ENCODE measurements at regions of chr14 and their contacts with region 1.

Region 1: GRCh38 chr14:69129264-69129880 is 23.5 kb downstream of the DCAF5 start:
- DNase-seq: peak; percentile 58
- H3K4me3 Mint-ChIP-seq: no peak overlapping the region
- H3K27ac Mint-ChIP-seq: peak overlapping the region; percentile 51
- H3K4me1 Mint-ChIP-seq: peaks cover 35% of the 10 kb centered on the region
- H3K27me3 Mint-ChIP-seq: no peaks in the 10 kb centered on the region

Region 2: GRCh38 chr14:69153131-69153872 is 23.9 kb after region 1 on chr14:
- intact Hi-C with region 1: loop called (anchors 2 kb)
- DNase-seq: peak; percentile 90
- H3K4me3 Mint-ChIP-seq: peak overlapping the region; percentile 90
- H3K27ac Mint-ChIP-seq: peak overlapping the region; percentile 92
- H3K4me1 Mint-ChIP-seq: peaks cover 33% of the 10 kb centered on the region
- H3K27me3 Mint-ChIP-seq: peaks cover 39% of the 10 kb centered on the region

Region 3: DNA sequence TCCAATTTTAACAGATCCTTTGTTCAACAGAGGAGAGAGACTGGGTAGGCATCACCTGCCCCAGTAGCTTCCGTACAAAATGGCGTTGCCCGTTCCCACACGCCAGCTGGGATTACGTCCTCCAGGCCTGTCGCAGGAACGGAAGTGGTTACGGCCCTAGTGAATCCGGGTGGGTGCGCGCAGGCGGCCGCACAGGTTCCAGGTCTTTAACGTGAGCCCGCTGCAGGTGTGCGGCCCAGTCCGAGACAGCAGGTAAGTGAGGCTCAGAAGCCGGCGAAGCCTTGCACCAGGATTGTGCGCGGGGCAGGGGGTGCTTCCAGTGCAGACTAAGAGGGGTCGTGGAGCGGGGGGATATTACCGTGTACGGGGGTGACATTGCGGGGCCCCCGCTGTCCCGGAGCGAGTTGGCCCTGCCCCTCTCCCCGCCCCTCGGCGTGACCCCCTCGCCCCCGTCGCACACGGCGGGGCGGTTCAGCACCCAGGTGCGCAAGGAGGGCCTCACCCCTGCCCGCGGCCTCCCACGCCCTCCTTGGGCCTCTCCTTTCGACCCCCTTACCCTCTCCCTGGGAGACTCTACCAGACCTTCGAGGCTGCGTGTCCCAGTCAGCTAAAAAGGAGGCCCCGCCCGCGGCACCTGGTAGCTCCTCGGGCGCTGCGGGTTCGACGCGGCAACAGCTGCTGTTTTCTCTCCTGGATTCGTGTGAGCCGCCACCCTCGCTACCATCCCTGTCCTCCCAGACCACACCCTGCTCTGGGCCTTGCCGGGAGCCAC is 62.2 kb after region 1 on chr14 and contains the start of gene EXD2:
- intact Hi-C with region 1: loop called (anchors 5 kb)
- DNase-seq: peak; percentile 45
- H3K4me3 Mint-ChIP-seq: peak within 1 kb of the TSS; percentile 89
- H3K27ac Mint-ChIP-seq: peak within 1 kb of the TSS; percentile 82
- H3K4me1 Mint-ChIP-seq: peaks cover 36% of the 10 kb centered on the region
- H3K27me3 Mint-ChIP-seq: peaks cover 2% of the 10 kb centered on the region
- total RNA-seq, gene EXD2: 6.3 and 6.5 TPM in 2 replicates

Region 4: GRCh38 chr14:69242311-69243224 is 113.2 kb after region 1 on chr14:
- intact Hi-C with region 1: loop called (anchors 2 kb)
- DNase-seq: peak; percentile 27
- H3K4me3 Mint-ChIP-seq: no peak overlapping the region
- H3K27ac Mint-ChIP-seq: no peak overlapping the region
- H3K4me1 Mint-ChIP-seq: no peaks in the 10 kb centered on the region
- H3K27me3 Mint-ChIP-seq: peaks cover 2% of the 10 kb centered on the region

Region 5: DNA sequence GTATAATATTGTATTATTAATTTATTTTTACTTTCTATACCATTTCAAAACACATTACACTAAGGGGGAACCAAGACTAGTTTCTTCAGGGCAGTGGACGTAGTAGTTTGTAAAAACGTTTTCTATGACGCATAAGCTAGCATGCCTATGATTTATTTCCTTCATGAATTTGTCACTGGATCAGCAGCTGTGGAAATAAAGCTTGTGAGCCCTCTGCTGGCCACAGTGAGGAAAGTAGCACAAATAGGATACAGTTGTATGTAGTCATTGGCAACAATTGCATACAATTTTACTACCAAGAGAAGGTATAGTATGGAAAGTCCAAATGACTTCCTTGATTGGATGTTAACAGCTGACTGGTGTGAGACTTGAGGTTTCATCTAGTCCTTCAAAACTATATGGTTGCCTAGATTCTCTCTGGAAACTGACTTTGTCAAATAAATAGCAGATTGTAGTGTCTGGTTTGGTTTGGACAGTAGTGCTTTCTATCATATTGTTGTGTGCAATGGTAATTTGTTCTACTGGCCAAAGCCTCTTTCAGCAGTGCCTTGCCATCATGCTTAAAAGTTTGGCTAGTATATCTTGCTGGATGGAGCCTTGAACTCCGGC is 330.8 kb after region 1 on chr14:
- intact Hi-C with region 1: loop called (anchors 1 kb)
- DNase-seq: peak; percentile 40
- H3K4me3 Mint-ChIP-seq: no peak overlapping the region
- H3K27ac Mint-ChIP-seq: no peak overlapping the region
- H3K4me1 Mint-ChIP-seq: no peaks in the 10 kb centered on the region
- H3K27me3 Mint-ChIP-seq: no peaks in the 10 kb centered on the region